Astrocyte of the cerebellum (primary cell): ENCODE measurements at regions of chr5 and their contacts with region 1.

Region 1: GRCh38 chr5:147576646-147577535 is 67.0 kb upstream of the DPYSL3 start:
- DNase-seq: no peak
- H3K4me3 ChIP-seq: no peak overlapping the region
- CTCF ChIP-seq: peak; percentile 98

Region 2: GRCh38 chr5:146475190-146475801 is 1101.6 kb before region 1 on chr5:
- in situ Hi-C with region 1: loop called (anchors 25 kb)
- DNase-seq: no peak
- H3K4me3 ChIP-seq: no peak overlapping the region
- CTCF ChIP-seq: peak; percentile 36

Region 3: DNA sequence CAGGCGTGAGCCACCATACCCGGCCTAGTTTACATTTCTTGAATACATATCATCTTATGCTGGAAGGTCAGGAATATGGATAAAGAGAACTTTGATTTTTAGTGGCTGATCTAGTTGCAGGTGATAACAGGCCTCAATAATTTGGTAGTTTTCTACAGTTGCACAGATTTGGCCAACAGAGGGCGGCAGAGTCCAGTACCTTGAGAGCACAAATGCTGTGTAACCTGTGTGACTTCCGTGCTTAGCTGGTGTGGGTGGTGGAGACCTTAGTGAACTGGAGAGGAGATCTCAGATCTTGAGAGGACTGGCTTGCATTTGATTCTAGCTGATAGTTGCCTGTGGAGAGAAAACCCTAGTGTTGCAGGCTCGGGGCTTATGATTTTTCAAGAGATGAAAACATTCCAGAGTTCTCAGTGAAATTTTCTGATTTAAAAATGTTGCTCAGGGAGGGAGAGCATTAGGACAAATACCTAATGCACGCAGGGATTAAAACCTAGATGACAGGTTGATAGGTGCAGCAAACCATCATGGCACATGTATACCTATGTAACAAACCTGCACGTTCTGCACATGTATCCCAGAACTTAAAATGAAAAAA is 1043.5 kb before region 1 on chr5:
- in situ Hi-C with region 1: loop called (anchors 10 kb)
- DNase-seq: peak; percentile 38
- H3K4me3 ChIP-seq: no peak overlapping the region
- CTCF ChIP-seq: peak; percentile 86